Spleen (tissue), 13 donors: ENCODE measurements at regions of chrX and their contacts with region 1.

Region 1: GRCh38 chrX:53317365-53318069 is 36.1 kb upstream of the IQSEC2 start:
- DNase-seq: peak; percentile 90
- H3K4me3 ChIP-seq: no peak overlapping the region
- H3K27ac ChIP-seq: no peak overlapping the region
- H3K4me1 ChIP-seq: peaks cover 4 to 34% (median 22%) of the 10 kb centered on the region in 6 donors
- H3K27me3 ChIP-seq: peaks cover 0 to 56% (median 43%) of the 10 kb centered on the region in 7 donors
- CTCF ChIP-seq: peak; percentile 17 to 93 (median 82)
- POLR2A ChIP-seq: no peak

Region 2: DNA sequence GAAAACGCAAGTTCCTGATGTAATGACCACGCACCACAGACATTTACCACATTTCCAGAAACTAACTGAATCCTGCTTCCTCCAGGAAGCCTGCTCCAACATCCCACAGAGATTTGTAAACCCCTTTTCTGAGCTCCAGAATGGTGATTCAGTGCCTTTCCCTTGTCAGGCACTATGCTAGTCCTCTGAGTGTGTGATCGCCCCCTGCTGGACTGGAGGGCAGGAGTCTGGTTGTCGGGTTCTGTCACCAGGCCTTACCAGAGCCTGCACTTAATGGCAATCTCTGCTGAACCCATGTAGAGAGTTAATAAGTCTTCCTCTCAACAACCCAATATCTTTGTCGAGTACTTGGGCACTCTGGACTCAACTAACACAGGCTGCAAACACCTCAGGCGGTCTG is 78.0 kb before region 1 on chrX:
- intact Hi-C with region 1: no loop called
- DNase-seq: peak; percentile 63
- H3K4me3 ChIP-seq: no peak overlapping the region
- H3K27ac ChIP-seq: no peak overlapping the region
- H3K4me1 ChIP-seq: no peaks in the 10 kb centered on the region
- H3K27me3 ChIP-seq: no peaks in the 10 kb centered on the region
- CTCF ChIP-seq: peak in 1 of 11 experiments; percentile 32
- POLR2A ChIP-seq: no peak

Region 3: GRCh38 chrX:53395601-53396298 is 78.2 kb after region 1 on chrX:
- intact Hi-C with region 1: no loop called
- DNase-seq: no peak
- H3K4me3 ChIP-seq: no peak overlapping the region
- H3K27ac ChIP-seq: no peak overlapping the region
- H3K4me1 ChIP-seq: no peaks in the 10 kb centered on the region
- H3K27me3 ChIP-seq: no peaks in the 10 kb centered on the region
- CTCF ChIP-seq: no peak
- POLR2A ChIP-seq: no peak

Region 4: DNA sequence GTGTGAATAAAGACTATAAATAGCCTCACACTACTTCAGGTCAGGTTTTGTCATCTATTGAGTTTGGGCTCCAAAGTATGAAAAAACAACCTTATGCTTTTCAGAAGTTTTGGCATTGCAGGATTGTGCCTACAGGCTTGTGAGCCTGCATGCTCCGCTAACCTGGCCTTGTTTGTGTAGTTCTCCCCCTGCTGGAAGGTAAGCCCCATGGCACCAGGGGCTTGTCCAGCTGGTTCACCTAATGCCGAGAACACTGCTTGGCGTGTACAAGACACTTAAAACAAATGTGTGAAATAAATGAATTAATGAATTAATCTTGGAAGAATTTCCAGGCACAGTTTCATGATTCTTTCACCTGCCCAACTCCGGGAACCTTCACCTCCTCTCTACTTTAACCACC is 118.5 kb after region 1 on chrX:
- intact Hi-C with region 1: loop called (anchors 5 kb)
- DNase-seq: peak; percentile 86
- H3K4me3 ChIP-seq: no peak overlapping the region
- H3K27ac ChIP-seq: no peak overlapping the region
- H3K4me1 ChIP-seq: peaks cover 0 to 29% (median 21%) of the 10 kb centered on the region in 6 donors
- H3K27me3 ChIP-seq: peaks cover 0 to 19% (median 5%) of the 10 kb centered on the region in 7 donors
- CTCF ChIP-seq: peak; percentile 43 to 92 (median 84)
- POLR2A ChIP-seq: no peak